ENCODE measurements at regions of chr2 and their contacts with region 1.

Region 1: DNA sequence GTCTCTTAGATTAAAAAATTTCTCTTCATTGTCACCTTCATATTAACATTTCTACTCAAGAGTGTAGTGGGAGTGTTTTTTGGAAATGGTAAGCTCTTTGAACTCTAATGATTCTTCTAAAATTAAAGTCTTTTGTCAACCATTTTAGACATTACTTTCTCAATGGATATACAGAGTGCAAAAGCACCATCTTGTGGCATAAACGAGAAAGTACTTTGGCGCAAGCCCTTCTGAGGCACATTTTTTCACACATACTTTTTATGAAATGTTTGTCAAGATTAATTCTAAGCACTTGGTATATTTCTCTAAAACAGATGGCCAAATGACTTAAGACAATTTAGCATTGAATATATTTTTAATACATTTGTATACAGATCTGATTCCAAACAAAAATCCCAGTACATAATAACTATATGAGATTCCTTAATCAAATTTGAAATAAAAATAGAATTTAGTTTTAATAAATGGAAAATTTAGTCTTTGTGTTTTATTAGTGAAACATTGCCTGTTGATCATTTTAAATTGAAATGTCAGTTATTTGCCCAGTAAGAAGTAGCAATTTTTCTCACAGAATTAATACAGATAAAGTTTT is 63.3 kb upstream of the GALNT5 start:
- DNase-seq: peak; percentile 2 to 3
- H3K4me3 ChIP-seq: no peak overlapping the region
- H3K27ac ChIP-seq: no peak overlapping the region
- H3K4me1 ChIP-seq: no peaks in the 10 kb centered on the region
- H3K27me3 ChIP-seq: no peaks in the 10 kb centered on the region
- CTCF ChIP-seq: peak; percentile 29 to 63 (median 48)
- POLR2A ChIP-seq: no peak

Region 2: GRCh38 chr2:155382776-155383175 is 1811.4 kb before region 1 on chr2:
- intact Hi-C with region 1: loop called (anchors 10 kb)
- DNase-seq: no peak
- H3K4me3 ChIP-seq: no peak overlapping the region
- H3K27ac ChIP-seq: no peak overlapping the region
- H3K4me1 ChIP-seq: no peaks in the 10 kb centered on the region
- H3K27me3 ChIP-seq: no peaks in the 10 kb centered on the region
- CTCF ChIP-seq: no peak
- POLR2A ChIP-seq: no peak

Region 3: GRCh38 chr2:157032017-157032416 is 162.2 kb before region 1 on chr2:
- intact Hi-C with region 1: no loop called
- DNase-seq: no peak
- H3K4me3 ChIP-seq: no peak overlapping the region
- H3K27ac ChIP-seq: no peak overlapping the region
- H3K4me1 ChIP-seq: no peaks in the 10 kb centered on the region
- H3K27me3 ChIP-seq: no peaks in the 10 kb centered on the region
- CTCF ChIP-seq: no peak
- POLR2A ChIP-seq: no peak

Region 4: GRCh38 chr2:157327621-157328500 is 133.7 kb after region 1 on chr2:
- intact Hi-C with region 1: no loop called
- DNase-seq: peak; percentile 64 to 76
- H3K4me3 ChIP-seq: no peak overlapping the region
- H3K27ac ChIP-seq: no peak overlapping the region
- H3K4me1 ChIP-seq: no peaks in the 10 kb centered on the region
- H3K27me3 ChIP-seq: no peaks in the 10 kb centered on the region
- CTCF ChIP-seq: peak; percentile 51 to 90 (median 64)
- POLR2A ChIP-seq: no peak